Endothelial cell of umbilical vein (primary cell): ENCODE measurements at regions of chr2 and their contacts with region 1.

Region 1: DNA sequence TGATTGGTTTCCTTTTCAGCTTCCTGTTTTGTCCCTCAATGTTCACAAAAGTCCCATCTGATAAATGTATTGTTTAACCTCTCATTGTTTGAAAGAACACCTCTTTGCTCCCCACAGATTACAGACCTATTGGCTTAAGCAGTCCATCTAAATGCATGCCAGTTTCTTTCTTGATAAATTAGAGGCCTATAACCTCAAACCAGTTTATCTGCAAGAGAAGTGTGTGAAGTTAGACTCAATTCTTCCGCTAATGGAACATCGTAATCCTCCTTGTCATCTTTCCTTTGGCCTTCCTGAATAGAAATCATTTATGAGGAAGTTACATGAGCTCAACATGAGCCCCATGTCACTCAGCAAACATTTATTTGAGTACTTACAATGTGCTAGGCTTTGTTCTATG is 74.0 kb downstream of the FRZB start:
- DNase-seq: peak; percentile 53
- H3K4me3 ChIP-seq: no peak overlapping the region
- H3K27ac ChIP-seq: no peak overlapping the region
- H3K4me1 ChIP-seq: peaks cover 8% of the 10 kb centered on the region
- H3K27me3 ChIP-seq: peaks cover 0 to 4% of the 10 kb centered on the region in 2 experiments
- CTCF ChIP-seq: no peak
- POLR2A ChIP-seq: no peak

Region 2: DNA sequence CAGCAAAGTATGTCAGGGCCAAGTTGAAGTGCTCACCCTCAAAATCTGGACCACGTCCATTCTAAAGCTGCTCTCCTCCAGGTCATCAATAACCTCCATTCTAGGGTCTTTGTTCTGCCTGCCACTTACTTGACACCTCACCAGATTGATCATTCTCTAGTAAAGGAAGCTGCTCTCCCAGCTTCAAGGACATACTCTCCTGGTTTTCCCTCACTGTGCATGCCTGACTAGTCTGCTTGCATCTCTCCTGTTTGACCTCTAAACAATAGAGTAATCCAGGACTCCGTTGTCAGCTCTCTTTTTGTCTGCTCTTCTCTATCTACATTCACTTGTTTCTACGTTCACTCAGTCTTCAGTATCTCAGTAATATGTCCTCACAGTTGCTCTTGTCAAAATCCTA is 14.9 kb after region 1 on chr2:
- CTCF ChIA-PET with region 1: interaction called, 10 read pairs
- POLR2A ChIA-PET with region 1: no interaction called
- dilution Hi-C with region 1: no loop called
- intact Hi-C with region 1: no loop called
- DNase-seq: no peak
- H3K4me3 ChIP-seq: no peak overlapping the region
- H3K27ac ChIP-seq: no peak overlapping the region
- H3K4me1 ChIP-seq: no peaks in the 10 kb centered on the region
- H3K27me3 ChIP-seq: peaks cover 15 to 24% of the 10 kb centered on the region in 2 experiments
- CTCF ChIP-seq: no peak
- POLR2A ChIP-seq: no peak

Region 3: DNA sequence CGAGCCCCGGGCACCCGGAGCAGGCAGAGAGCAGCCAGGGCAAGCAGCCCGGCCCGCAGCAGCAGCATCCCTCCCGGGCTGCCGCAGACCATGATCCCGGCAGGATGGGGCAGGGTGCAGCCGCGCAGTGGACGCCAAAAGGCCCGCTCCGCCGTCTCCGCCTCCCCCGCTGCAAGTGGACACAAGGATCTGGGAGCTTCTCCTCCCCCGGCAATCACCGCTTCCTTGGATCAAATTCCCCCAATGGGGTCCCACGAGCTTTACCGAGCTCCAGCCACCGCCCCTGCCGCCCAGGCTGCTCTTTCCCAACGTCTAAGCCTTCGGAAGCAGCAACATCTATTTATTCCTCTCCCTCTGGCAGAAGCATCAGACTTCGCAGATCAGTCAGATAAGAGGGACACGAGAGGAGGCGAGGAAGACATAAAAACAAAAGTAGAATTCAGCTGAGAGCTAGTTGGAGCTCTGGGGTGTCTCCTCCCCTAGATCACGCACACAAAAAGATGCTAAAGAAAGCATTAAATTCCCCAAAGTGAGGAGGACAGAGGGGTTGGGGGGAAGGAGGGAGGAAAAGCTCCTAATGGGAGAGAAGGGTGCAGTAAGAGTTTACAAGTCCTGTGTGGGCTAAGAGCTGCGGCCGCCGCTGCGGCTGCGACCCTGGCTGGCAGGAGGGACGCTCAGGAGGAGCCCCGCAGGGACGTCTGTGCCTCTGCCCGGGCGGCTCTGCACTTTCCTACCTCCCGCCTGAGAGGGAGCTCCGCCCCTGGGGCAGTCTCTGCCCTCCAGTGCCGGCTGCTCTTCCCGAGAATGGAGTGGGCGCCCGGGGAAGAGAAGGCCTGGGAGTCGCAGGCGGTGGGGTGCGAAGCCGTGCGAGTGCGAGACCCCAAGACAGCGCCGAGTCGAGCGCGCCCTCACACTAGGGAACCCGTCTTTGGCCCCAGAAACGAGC is 74.3 kb after region 1 on chr2 and contains the start of gene FRZB:
- CTCF ChIA-PET with region 1: no interaction called
- POLR2A ChIA-PET with region 1: no interaction called
- dilution Hi-C with region 1: no loop called
- intact Hi-C with region 1: loop called (anchors 5 kb)
- DNase-seq: peak; percentile 69
- H3K4me3 ChIP-seq: peak within 1 kb of the TSS; percentile 31 to 70 (median 54)
- H3K27ac ChIP-seq: no peak within 1 kb of the TSS
- H3K4me1 ChIP-seq: peaks cover 11% of the 10 kb centered on the region
- H3K27me3 ChIP-seq: peaks cover 8 to 13% of the 10 kb centered on the region in 2 experiments
- CTCF ChIP-seq: no peak
- POLR2A ChIP-seq: no peak
- total RNA-seq, gene FRZB: 0.09 TPM in 1 of 2 replicates, not detected in the other

Region 4: GRCh38 chr2:182907081-182907830 is 114.8 kb after region 1 on chr2:
- CTCF ChIA-PET with region 1: no interaction called
- POLR2A ChIA-PET with region 1: no interaction called
- dilution Hi-C with region 1: no loop called
- intact Hi-C with region 1: no loop called
- DNase-seq: peak; percentile 25
- H3K4me3 ChIP-seq: no peak overlapping the region
- H3K27ac ChIP-seq: no peak overlapping the region
- H3K4me1 ChIP-seq: no peaks in the 10 kb centered on the region
- H3K27me3 ChIP-seq: no peaks in the 10 kb centered on the region
- CTCF ChIP-seq: no peak
- POLR2A ChIP-seq: no peak